ENCODE measurements at regions of chr14 and their contacts with region 1.

Region 1: GRCh38 chr14:33332138-33332896 is 393.6 kb downstream of the NPAS3 start:
- DNase-seq: no peak
- ATAC-seq: no peak
- H3K4me3 ChIP-seq: no peak overlapping the region
- H3K27ac ChIP-seq: no peak overlapping the region
- H3K4me1 ChIP-seq: no peaks in the 10 kb centered on the region
- H3K27me3 ChIP-seq: peaks cover 0 to 5% of the 10 kb centered on the region in 2 experiments; a peak in 1 of 5 replicates
- CTCF ChIP-seq: no peak
- EP300 ChIP-seq: no peak
- POLR2A ChIP-seq: no peak
- RAD21 ChIP-seq: no peak

Region 2: DNA sequence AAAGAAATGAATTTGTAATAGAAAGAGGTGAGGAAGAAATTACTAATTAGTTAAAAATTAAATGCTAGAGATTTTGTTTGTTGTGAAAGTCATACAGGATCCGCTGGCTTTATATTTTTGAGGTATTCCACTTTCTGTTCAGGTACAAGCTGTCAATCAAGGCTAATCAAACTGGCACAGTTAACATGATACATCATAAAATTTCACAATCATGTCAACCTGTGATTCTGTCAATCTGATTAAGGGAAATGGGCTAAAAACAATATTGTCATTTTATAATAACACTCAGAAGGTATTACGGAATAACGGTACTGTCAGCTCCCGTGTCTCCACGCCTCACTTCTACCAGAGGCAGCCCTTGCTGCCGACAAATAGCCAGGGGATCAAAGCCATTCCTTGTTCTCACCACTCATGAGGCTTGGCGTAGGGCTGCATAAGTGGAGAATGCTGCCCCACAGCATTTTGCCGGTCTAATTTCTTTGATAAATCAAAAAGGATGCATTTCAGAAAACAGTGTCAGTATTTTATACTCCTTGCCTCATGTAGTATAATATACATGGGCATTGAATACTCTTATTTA is 40.7 kb before region 1 on chr14:
- CTCF ChIA-PET with region 1: no interaction called
- POLR2A ChIA-PET with region 1: no interaction called
- in situ Hi-C with region 1: no loop called
- intact Hi-C with region 1: loop called (anchors 2 kb)
- DNase-seq: no peak
- ATAC-seq: no peak
- H3K4me3 ChIP-seq: no peak overlapping the region
- H3K27ac ChIP-seq: no peak overlapping the region
- H3K4me1 ChIP-seq: no peaks in the 10 kb centered on the region
- H3K27me3 ChIP-seq: no peaks in the 10 kb centered on the region
- CTCF ChIP-seq: no peak
- EP300 ChIP-seq: no peak
- POLR2A ChIP-seq: no peak
- RAD21 ChIP-seq: no peak

Region 3: DNA sequence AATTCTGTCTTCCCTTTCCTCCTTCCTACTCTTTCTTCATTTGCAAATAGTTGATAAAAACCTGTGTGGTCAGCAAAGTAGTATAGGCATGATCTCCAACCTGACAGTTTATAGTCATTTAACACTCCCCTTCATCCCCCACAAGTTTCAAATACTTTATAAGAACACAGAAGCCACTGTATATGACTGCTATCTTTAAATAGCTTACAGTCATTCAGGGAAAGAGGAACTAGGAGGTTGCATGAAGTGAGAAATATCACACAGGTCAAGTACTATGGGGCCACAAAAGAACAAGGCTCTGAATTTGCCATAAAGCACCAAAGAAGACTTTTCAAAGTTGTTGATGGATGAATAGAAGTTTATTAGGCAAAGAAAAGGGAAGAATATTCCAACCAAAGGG is 37.7 kb after region 1 on chr14:
- CTCF ChIA-PET with region 1: no interaction called
- POLR2A ChIA-PET with region 1: no interaction called
- in situ Hi-C with region 1: no loop called
- intact Hi-C with region 1: no loop called
- DNase-seq: no peak
- ATAC-seq: no peak
- H3K4me3 ChIP-seq: no peak overlapping the region
- H3K27ac ChIP-seq: no peak overlapping the region
- H3K4me1 ChIP-seq: no peaks in the 10 kb centered on the region
- H3K27me3 ChIP-seq: no peaks in the 10 kb centered on the region
- CTCF ChIP-seq: no peak
- EP300 ChIP-seq: no peak
- POLR2A ChIP-seq: no peak
- RAD21 ChIP-seq: no peak